PC-3 (cell line): ENCODE measurements at regions of chr7 and their contacts with region 1.

Region 1: DNA sequence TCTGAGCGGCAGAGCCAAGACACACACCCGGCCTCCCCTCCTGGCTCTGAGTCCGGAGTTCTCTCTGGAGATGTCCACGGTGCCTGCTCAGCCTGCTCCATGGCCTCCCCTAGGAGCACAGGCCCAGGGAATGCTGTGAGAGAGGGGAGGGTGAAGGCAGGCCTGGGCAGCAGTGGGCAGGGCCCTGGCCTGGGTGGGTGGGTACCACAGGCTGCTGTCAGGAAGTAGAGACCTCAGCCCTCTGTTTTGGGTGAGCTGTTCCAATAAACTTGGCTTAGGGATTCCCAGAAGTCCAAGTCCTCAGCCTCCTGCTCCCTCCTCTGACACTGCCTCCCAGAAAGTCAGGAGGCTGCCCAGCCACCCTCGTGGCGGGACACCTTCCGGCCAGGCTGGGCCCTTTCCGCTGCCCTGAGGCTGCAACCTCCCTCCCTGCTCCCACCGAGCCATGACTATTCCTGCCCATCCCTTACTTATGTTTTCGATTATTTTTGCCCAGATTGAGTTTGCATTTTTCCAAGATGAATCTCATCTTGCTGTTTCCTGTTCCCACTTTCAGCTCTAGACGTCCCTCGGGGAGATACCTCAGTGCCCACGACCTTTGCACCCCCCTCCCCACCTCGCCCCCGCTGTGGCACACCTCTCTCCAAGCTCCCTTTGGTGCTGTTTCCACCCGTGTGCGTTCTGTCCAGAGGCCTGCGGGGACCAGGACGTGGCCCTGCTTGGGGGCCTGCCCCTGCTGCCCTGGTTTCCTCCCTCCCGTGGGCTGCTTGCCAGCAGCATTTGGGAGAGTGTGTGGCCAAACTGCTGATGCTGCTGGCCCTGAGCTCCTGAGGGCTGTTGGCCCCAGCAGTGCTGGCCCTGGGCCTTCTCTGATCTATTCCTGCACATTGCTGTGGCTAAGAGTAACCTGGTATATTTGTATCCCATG is 5.8 kb upstream of the POLM start:
- DNase-seq: peak; percentile 52
- ATAC-seq: peak; percentile 82
- H3K4me3 ChIP-seq: no peak overlapping the region
- H3K27ac ChIP-seq: peak overlapping the region; percentile 76
- H3K4me1 ChIP-seq: peaks cover 23% of the 10 kb centered on the region
- H3K27me3 ChIP-seq: no peaks in the 10 kb centered on the region
- CTCF ChIP-seq: no peak

Region 2: DNA sequence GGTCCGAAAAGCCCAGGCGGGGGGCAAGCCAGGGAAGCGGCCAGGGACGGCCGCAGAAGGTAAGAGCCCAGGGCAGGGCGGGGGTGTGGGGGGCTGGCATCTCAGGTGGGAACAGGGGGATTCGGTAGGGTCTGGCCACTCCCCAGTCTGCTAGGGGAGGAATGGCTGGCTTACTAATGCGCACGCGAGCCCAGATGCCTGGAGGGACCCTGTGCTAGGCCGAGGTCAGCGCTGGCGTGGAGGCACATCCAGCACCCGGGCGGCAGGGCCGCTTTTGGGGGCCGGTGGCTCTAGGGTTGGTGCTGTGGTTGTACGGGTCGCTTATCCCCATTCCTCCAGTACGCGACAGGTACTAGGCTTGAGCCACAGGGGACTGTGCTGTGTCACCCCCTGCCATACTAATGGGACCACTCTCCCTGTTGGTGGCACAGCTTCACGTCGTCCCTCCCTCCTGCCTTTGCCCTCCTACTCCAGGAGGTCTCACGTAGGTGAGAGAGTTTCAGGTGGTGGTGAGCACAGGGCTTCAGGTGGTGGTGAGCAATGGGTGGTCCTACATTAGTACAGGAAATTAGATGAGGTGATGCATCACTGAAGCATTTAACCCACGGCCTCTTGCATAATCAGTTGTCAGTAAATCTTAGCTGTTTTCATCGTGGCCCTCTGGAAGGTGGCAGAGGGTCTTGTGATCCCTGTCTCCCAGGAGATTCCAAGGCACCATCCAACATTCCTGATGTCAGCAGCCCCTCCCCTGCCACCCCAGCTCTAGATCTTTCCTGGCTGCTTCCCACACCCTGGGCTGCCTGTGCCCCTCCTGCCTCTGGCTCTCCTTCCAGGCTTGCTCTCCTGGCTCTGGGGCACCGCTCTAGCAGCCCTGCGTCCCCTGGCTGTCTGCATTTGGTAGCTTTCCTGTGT is 16.9 kb after region 1 on chr7:
- CTCF ChIA-PET with region 1: interaction called, 4 read pairs
- POLR2A ChIA-PET with region 1: interaction called, 40 read pairs
- intact Hi-C with region 1: no loop called
- DNase-seq: no peak
- ATAC-seq: no peak
- H3K4me3 ChIP-seq: no peak overlapping the region
- H3K27ac ChIP-seq: no peak overlapping the region
- H3K4me1 ChIP-seq: no peaks in the 10 kb centered on the region
- H3K27me3 ChIP-seq: no peaks in the 10 kb centered on the region
- CTCF ChIP-seq: no peak

Region 3: GRCh38 chr7:44131173-44132029 is 43.2 kb after region 1 on chr7:
- CTCF ChIA-PET with region 1: no interaction called
- POLR2A ChIA-PET with region 1: no interaction called
- intact Hi-C with region 1: no loop called
- DNase-seq: peak; percentile 44
- ATAC-seq: peak; percentile 92
- H3K4me3 ChIP-seq: no peak overlapping the region
- H3K27ac ChIP-seq: no peak overlapping the region
- H3K4me1 ChIP-seq: no peaks in the 10 kb centered on the region; the same call in 1 of the 2 replicates
- H3K27me3 ChIP-seq: no peaks in the 10 kb centered on the region
- CTCF ChIP-seq: peak; percentile 60

Region 4: DNA sequence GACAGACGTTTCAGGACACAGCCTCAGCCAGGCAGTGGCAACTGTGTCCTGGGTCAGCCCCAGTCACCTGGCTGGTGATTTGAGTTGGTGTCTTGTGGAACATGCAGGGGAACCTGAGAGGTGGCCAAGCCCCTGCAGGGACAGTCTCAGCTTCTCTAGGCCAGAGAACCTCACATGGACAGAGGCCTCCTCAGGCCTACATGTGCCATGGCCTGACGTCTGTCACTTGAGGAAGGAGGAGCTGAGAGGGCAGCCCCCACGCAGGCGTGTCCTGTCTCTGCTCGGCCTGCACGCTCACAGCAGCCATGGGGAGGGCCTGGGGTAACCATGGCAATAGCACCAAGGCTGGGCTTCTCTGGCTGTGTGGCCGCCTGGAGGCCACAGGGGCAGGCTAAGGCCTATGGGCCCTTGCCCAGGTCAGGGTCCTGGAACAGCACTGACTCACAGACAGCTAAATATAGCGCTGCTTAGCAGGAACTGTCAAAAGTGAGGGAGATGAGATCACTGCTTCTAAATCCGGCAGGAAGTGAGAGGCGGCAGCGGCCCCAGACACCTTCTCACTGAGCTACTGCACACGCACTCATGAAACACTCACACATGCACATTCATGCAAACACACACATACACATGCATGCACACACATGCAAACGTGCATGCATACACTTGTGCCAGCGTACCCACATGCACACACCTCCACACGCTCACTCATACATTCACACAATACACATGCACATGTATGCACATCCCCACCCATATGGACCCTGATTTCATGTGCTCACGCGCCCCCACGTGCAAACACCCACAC is 169.6 kb after region 1 on chr7:
- CTCF ChIA-PET with region 1: no interaction called
- POLR2A ChIA-PET with region 1: no interaction called
- intact Hi-C with region 1: no loop called
- DNase-seq: peak; percentile 78
- ATAC-seq: peak; percentile 78
- H3K4me3 ChIP-seq: no peak overlapping the region
- H3K27ac ChIP-seq: peak overlapping the region; percentile 78
- H3K4me1 ChIP-seq: peaks cover 27% of the 10 kb centered on the region
- H3K27me3 ChIP-seq: no peaks in the 10 kb centered on the region
- CTCF ChIP-seq: no peak